B cell (primary cell): ENCODE measurements at regions of chr16 and their contacts with region 1.

Region 1: DNA sequence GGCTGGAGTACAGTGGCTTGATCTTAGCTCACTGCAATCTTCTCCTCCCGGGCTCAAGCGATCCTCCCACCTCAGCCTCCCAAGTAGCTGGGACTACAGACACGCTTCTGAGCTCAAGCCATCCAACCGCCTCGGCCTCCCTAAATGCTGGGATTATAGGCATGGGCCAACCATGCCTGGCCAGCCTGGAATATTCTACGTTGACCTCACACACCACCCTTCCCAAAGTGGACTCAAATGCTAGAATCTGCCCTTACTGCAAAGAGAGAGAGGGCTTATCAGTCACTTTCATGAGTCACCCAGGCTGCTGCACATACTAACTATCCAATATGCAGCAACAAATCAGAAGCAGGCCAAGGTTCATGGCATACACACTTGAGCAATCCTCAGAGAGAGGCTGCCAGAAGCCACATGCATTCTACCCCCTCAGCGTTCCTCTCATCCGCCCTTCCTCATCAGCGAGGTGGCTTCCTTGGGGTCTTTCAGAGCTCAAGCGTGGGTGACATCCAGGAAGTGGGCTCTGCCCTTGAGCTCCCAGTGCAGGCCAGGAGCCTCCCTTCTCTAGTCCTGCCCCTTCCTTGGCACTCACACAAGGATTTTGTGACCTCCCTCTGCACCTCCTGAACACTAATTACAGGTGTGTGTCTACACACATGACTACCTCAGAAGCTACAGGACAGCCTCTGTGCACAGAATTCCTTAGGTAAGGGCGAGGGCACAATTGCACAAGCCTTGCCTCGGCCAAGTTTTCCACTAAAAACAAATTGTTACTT is 24.8 kb upstream of the SIAH1 start:
- DNase-seq: no peak
- ATAC-seq: no peak
- H3K4me3 ChIP-seq: no peak overlapping the region
- H3K4me3 Mint-ChIP-seq: no peak overlapping the region
- H3K27ac ChIP-seq: no peak overlapping the region
- H3K27ac Mint-ChIP-seq: no peak overlapping the region
- H3K4me1 ChIP-seq: no peaks in the 10 kb centered on the region
- H3K4me1 Mint-ChIP-seq: no peaks in the 10 kb centered on the region
- H3K27me3 ChIP-seq: no peaks in the 10 kb centered on the region
- H3K27me3 Mint-ChIP-seq: no peaks in the 10 kb centered on the region
- CTCF ChIP-seq: no peak

Region 2: GRCh38 chr16:48003226-48003907 is 406.7 kb before region 1 on chr16:
- CTCF ChIA-PET with region 1: no interaction called
- POLR2A ChIA-PET with region 1: no interaction called
- intact Hi-C with region 1: no loop called
- DNase-seq: no peak
- ATAC-seq: no peak
- H3K4me3 ChIP-seq: no peak overlapping the region
- H3K4me3 Mint-ChIP-seq: no peak overlapping the region
- H3K27ac ChIP-seq: no peak overlapping the region
- H3K27ac Mint-ChIP-seq: no peak overlapping the region
- H3K4me1 ChIP-seq: no peaks in the 10 kb centered on the region
- H3K4me1 Mint-ChIP-seq: no peaks in the 10 kb centered on the region
- H3K27me3 ChIP-seq: peaks cover 0 to 2% (median 0%) of the 10 kb centered on the region in 4 experiments
- H3K27me3 Mint-ChIP-seq: peaks cover 23% of the 10 kb centered on the region
- CTCF ChIP-seq: no peak

Region 3: GRCh38 chr16:48426244-48427141 is 16.5 kb after region 1 on chr16:
- CTCF ChIA-PET with region 1: no interaction called
- POLR2A ChIA-PET with region 1: interaction called, 11 read pairs
- intact Hi-C with region 1: no loop called
- DNase-seq: peak; percentile 35
- ATAC-seq: peak; percentile 50
- H3K4me3 ChIP-seq: no peak overlapping the region
- H3K4me3 Mint-ChIP-seq: peak overlapping the region; percentile 40
- H3K27ac ChIP-seq: peak overlapping the region; percentile 61
- H3K27ac Mint-ChIP-seq: peak overlapping the region; percentile 90
- H3K4me1 ChIP-seq: peaks cover 34 to 43% of the 10 kb centered on the region in 2 donors
- H3K4me1 Mint-ChIP-seq: peaks cover 42% of the 10 kb centered on the region
- H3K27me3 ChIP-seq: no peaks in the 10 kb centered on the region
- H3K27me3 Mint-ChIP-seq: no peaks in the 10 kb centered on the region
- CTCF ChIP-seq: no peak